ENCODE measurements at regions of chr1 and their contacts with region 1.

Region 1: GRCh38 chr1:15858069-15858670 is 10.7 kb downstream of the SPEN start:
- DNase-seq: no peak
- H3K4me3 ChIP-seq: no peak overlapping the region
- H3K27ac ChIP-seq: no peak overlapping the region
- H3K4me1 ChIP-seq: no peaks in the 10 kb centered on the region
- H3K27me3 ChIP-seq: no peaks in the 10 kb centered on the region
- CTCF ChIP-seq: no peak

Region 2: GRCh38 chr1:15680111-15680510 is 178.1 kb before region 1 on chr1:
- CTCF ChIA-PET with region 1: no interaction called
- POLR2A ChIA-PET with region 1: interaction called, 10 read pairs
- intact Hi-C with region 1: no loop called
- DNase-seq: no peak
- H3K4me3 ChIP-seq: no peak overlapping the region
- H3K27ac ChIP-seq: no peak overlapping the region
- H3K4me1 ChIP-seq: no peaks in the 10 kb centered on the region
- H3K27me3 ChIP-seq: no peaks in the 10 kb centered on the region
- CTCF ChIP-seq: no peak

Measured in A673 (cell line).